Activated CD4-positive, alpha-beta T cell treated with anti-CD3 and anti-CD28 coated beads for 36 hours (primary cell): ENCODE measurements at regions of chr1 and their contacts with region 1.

Region 1: DNA sequence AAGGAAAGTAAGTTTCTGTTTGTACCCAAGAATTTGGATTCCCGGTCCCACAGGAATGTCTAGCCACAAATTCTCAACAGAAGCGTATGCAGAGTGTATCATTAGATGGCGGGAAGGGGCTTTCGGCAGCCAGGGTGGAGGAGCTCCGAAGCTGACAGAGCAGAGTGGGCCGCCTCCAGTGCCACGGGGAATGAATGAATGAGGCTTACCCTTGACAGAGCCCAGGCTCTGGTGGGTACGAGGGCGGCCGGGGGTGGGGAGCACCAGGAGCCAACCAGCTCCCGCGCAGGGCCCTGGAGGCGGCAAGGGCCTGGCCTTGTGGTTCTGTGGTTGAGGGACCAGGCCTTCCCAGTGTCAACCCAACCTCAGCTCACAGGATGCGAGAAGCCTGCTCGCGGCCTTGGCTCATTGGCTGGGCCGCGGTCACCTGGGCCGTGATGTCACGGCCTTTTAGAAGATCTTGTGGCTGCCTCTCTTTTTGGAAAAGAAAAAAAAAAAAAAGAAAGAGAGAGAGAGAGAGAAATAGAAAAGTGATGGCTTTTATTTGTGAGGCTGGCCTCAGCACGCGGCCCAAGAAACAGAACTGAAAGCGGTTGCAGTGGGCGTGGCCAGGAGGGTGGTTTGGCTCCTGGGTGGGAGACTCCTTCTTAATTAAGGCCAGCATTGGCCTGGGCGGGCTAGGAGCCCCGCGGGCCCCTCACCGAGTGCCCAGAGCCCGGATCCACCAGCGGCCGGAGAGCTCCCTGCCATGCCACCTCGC is 34.9 kb upstream of the RUNX3 start:
- DNase-seq: peak; percentile 98
- ATAC-seq: peak; percentile 81
- H3K4me3 Mint-ChIP-seq: peak overlapping the region; percentile 94
- H3K27ac Mint-ChIP-seq: peak overlapping the region; percentile 94
- H3K4me1 Mint-ChIP-seq: peaks cover 72% of the 10 kb centered on the region
- H3K27me3 Mint-ChIP-seq: no peaks in the 10 kb centered on the region

Region 2: GRCh38 chr1:24481101-24481500 is 483.9 kb before region 1 on chr1:
- CTCF ChIA-PET with region 1: no interaction called
- POLR2A ChIA-PET with region 1: no interaction called
- intact Hi-C with region 1: loop called in 1 of 2 experiments (anchors 5 kb)
- DNase-seq: peak; percentile 81
- ATAC-seq: peak; percentile 76
- H3K4me3 Mint-ChIP-seq: peak overlapping the region; percentile 60
- H3K27ac Mint-ChIP-seq: peak overlapping the region; percentile 97
- H3K4me1 Mint-ChIP-seq: peaks cover 65% of the 10 kb centered on the region
- H3K27me3 Mint-ChIP-seq: no peaks in the 10 kb centered on the region

Region 3: DNA sequence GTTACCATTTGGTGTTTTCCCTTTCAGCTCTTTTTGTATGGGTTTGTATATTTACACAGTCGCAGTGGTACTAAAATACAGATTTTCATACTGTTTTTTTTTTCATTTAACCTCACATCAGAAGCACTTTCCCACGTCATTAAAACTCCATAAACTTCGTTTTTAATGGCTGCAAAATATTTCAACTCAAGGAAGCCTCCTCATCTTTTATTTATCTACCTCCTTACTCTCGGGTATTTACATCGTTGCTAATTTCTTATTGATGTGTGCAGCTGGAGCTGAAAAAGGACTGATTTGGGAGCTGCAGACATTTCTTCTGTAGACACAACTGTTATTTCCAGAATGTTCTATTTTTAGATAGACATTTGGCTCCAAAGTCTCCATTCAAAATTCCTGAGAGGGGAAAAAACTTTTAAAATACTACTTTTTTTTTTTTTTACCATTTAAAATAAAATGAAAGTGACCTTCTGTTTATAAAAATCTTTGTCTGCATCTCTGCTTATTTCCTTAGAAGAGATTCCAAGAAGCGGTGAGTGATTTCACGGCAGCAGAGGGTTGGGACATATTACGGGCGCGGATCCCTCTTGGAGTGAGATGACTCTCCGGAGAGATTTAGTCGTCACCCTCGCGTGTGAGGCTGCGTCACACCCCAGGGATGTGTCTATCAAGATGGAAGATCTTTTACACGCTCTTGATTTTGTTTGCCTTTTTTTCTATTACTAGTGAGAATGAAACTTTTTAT is 45.0 kb before region 1 on chr1:
- CTCF ChIA-PET with region 1: interaction called, 5 read pairs
- POLR2A ChIA-PET with region 1: interaction called, 5 read pairs
- intact Hi-C with region 1: loop called (anchors 1 kb)
- DNase-seq: peak; percentile 90
- ATAC-seq: peak; percentile 38
- H3K4me3 Mint-ChIP-seq: peak overlapping the region; percentile 54
- H3K27ac Mint-ChIP-seq: peak overlapping the region; percentile 97
- H3K4me1 Mint-ChIP-seq: peaks cover 69% of the 10 kb centered on the region
- H3K27me3 Mint-ChIP-seq: no peaks in the 10 kb centered on the region

Region 4: DNA sequence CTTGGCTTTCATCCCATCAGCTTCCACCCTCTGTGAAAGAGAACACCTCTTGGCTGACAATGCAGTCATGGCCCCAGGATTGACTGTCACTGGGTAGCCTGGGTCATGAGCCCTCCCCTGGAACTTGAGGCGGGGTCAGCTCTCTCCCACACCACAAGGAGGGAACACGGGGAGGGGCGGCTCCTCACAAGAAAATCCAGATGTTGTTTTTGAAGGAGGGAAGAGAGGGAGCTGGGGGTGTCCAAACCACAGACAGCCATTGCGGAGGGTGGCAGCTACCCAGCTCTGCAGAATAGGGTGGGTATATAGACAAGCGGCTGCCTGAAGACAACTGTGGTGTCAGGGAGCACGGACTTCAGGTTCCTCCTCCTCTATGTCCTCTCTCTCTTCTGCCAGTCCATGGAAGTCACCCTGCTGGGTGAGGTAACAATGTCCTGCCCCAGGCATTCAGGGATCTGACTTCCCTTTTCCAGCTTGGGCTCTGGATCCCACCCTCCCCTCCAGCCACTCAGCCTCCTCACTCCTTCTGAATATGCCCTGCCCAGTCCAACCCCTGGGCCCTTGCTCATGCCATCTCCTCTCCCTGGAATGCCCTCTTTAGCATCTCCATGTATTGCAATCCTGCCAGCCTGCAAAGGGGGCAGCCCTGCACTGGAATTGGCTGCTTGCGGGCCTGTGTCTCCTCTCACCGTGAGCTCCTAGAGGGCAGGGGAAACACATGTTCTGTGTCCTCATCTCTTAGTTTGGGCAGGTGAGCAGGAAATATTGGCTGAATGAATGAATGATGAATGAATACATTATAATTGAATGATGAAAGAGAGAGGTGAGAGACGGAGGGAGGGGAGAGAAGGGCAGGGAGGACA is 26.0 kb after region 1 on chr1:
- CTCF ChIA-PET with region 1: interaction called, 10 read pairs
- POLR2A ChIA-PET with region 1: interaction called, 7 read pairs
- intact Hi-C with region 1: loop called (anchors 1 kb)
- DNase-seq: peak; percentile 48
- ATAC-seq: peak; percentile 34
- H3K4me3 Mint-ChIP-seq: peak overlapping the region; percentile 50
- H3K27ac Mint-ChIP-seq: peak overlapping the region; percentile 100
- H3K4me1 Mint-ChIP-seq: peaks cover 86% of the 10 kb centered on the region
- H3K27me3 Mint-ChIP-seq: no peaks in the 10 kb centered on the region

Region 5: GRCh38 chr1:25037174-25038074 is 72.4 kb after region 1 on chr1:
- CTCF ChIA-PET with region 1: interaction called, 96 read pairs
- POLR2A ChIA-PET with region 1: interaction called, 9 read pairs
- intact Hi-C with region 1: loop called (anchors 1 kb)
- DNase-seq: peak; percentile 86
- ATAC-seq: peak; percentile 55
- H3K4me3 Mint-ChIP-seq: no peak overlapping the region
- H3K27ac Mint-ChIP-seq: peak overlapping the region; percentile 27
- H3K4me1 Mint-ChIP-seq: peaks cover 35% of the 10 kb centered on the region
- H3K27me3 Mint-ChIP-seq: no peaks in the 10 kb centered on the region

Region 6: GRCh38 chr1:25117233-25117823 is 152.3 kb after region 1 on chr1:
- CTCF ChIA-PET with region 1: interaction called, 3 read pairs
- POLR2A ChIA-PET with region 1: no interaction called
- intact Hi-C with region 1: loop called in 1 of 2 experiments (anchors 5 kb)
- DNase-seq: peak; percentile 70
- ATAC-seq: no peak
- H3K4me3 Mint-ChIP-seq: no peak overlapping the region
- H3K27ac Mint-ChIP-seq: no peak overlapping the region
- H3K4me1 Mint-ChIP-seq: peaks cover 28% of the 10 kb centered on the region
- H3K27me3 Mint-ChIP-seq: peaks cover 4% of the 10 kb centered on the region

Region 7: GRCh38 chr1:25700144-25700523 is 735.1 kb after region 1 on chr1:
- CTCF ChIA-PET with region 1: no interaction called
- POLR2A ChIA-PET with region 1: no interaction called
- intact Hi-C with region 1: no loop called
- DNase-seq: no peak
- ATAC-seq: no peak
- H3K4me3 Mint-ChIP-seq: no peak overlapping the region
- H3K27ac Mint-ChIP-seq: no peak overlapping the region
- H3K4me1 Mint-ChIP-seq: peaks cover 62% of the 10 kb centered on the region
- H3K27me3 Mint-ChIP-seq: no peaks in the 10 kb centered on the region